HEK293 (cell line): ENCODE measurements at regions of chr1 and their contacts with region 1.

Region 1: GRCh38 chr1:240027059-240027462 is 64.6 kb upstream of the FMN2 start:
- H3K4me3 ChIP-seq: no peak overlapping the region
- H3K27ac ChIP-seq: no peak overlapping the region
- H3K4me1 ChIP-seq: no peaks in the 10 kb centered on the region
- CTCF ChIP-seq: peak; percentile 78; the same call in 1 of the 2 replicates

Region 2: DNA sequence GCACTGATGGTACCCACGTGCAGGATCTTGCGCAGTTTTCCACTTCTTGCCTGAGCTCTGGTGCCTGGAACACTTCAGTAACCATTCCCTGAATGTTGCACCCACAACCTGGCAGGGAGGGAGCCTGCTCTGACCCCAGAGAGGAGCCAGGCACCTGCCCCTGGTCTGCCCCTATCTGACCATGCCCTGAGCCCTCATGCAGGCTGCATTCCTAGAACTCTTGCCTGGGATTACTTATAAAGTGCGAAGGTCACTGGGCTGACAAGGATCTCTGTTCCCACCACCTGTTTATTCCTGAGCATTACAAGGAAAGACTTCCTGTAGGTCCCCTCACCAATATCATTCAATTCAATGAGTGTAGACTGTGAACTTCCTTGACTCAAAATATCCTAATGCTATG is 127.3 kb before region 1 on chr1:
- CTCF ChIA-PET with region 1: no interaction called
- POLR2A ChIA-PET with region 1: no interaction called
- H3K4me3 ChIP-seq: no peak overlapping the region
- H3K27ac ChIP-seq: no peak overlapping the region
- H3K4me1 ChIP-seq: peaks cover 5% of the 10 kb centered on the region; the same call in 1 of the 2 replicates
- CTCF ChIP-seq: no peak

Region 3: DNA sequence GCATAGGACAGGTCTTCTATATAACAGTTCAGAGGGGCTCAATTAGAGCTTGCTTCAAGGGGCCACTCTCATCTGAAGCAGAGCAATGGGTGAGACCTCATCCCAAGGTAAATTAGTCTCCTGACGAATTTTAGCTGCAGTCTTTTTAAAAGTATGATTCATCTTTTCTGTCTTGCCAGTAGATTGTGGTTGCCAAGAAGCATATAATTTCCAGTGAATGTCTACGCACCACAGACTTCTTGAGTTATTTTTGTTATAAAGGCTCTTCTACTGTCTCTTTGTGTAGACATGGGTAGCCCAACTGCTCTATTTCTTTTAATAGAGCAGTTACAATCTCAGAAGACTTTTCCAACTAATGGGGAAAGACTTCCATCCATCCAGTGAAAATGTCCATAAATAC is 44.3 kb before region 1 on chr1:
- CTCF ChIA-PET with region 1: no interaction called
- POLR2A ChIA-PET with region 1: no interaction called
- H3K4me3 ChIP-seq: no peak overlapping the region
- H3K27ac ChIP-seq: no peak overlapping the region
- H3K4me1 ChIP-seq: no peaks in the 10 kb centered on the region
- CTCF ChIP-seq: no peak

Region 4: DNA sequence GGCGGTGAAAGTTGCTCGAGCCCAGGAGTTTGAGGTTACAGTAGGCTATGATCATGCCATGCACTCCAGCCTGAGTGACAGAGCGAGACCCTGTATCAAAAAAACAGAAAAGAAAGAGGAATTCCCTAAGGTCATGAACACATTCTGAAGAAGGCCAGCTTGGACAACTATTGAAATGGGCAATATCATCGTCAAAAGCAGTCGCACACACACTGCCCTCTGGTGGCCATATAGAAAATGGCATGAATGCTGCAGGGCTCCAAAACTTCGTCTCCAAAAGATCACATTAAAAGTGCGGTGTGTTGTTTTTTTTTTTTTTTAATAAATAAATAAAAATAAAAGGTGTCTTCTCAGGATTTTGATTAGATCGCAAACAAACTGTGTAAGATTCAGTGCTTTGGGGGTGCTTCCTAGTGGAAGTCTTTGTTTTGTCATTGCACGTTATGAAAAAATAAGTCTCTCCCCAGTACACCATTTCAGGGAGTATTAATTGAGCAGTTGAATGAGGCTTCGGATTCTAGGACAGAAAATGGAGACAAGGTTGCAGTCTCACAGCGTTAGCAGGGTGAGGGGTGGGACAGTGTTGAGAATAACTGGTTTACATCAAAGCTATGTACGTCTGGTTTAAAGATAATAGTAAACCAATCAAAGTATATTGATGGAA is 22.8 kb before region 1 on chr1:
- CTCF ChIA-PET with region 1: interaction called, 27 read pairs
- POLR2A ChIA-PET with region 1: no interaction called
- H3K4me3 ChIP-seq: no peak overlapping the region
- H3K27ac ChIP-seq: no peak overlapping the region
- H3K4me1 ChIP-seq: peaks cover 6% of the 10 kb centered on the region
- CTCF ChIP-seq: 0 out of 2 replicates have a peak, but pooled peaks have one; percentile 60

Region 5: DNA sequence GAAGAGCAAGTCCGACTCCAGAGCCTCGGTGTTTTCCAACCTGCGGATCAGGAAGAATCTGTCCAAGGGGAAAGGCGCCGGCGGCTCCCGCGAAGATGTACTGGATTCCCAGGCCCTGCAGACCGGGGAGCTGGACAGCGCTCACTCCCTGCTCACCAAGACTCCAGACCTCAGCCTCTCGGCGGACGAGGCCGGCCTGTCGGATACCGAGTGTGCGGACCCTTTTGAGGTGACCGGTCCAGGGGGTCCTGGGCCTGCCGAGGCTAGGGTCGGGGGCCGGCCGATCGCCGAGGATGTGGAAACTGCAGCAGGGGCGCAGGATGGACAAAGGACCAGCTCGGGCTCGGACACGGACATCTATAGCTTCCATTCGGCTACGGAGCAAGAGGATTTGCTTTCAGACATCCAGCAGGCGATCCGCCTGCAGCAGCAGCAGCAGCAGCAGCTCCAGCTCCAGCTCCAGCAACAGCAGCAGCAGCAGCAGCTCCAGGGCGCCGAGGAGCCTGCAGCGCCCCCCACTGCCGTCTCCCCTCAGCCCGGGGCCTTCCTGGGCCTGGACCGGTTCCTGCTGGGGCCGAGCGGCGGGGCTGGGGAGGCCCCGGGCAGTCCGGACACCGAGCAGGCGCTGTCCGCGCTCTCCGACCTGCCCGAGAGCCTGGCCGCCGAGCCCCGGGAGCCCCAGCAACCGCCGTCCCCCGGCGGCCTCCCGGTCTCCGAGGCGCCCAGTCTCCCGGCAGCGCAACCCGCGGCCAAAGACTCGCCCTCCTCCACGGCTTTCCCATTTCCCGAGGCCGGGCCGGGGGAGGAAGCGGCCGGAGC is 65.4 kb after region 1 on chr1:
- CTCF ChIA-PET with region 1: interaction called, 10 read pairs
- POLR2A ChIA-PET with region 1: interaction called, 3 read pairs
- H3K4me3 ChIP-seq: peak overlapping the region; percentile 89
- H3K27ac ChIP-seq: peak overlapping the region; percentile 83; the same call in 1 of the 2 replicates
- H3K4me1 ChIP-seq: peaks cover 26% of the 10 kb centered on the region
- CTCF ChIP-seq: peak; percentile 77

Region 6: GRCh38 chr1:240169188-240169587 is 142.1 kb after region 1 on chr1:
- CTCF ChIA-PET with region 1: interaction called, 19 read pairs
- POLR2A ChIA-PET with region 1: no interaction called
- H3K4me3 ChIP-seq: no peak overlapping the region
- H3K27ac ChIP-seq: no peak overlapping the region
- H3K4me1 ChIP-seq: peaks cover 5% of the 10 kb centered on the region; the same call in 1 of the 2 replicates
- CTCF ChIP-seq: peak; percentile 39; the same call in 1 of the 2 replicates

Region 7: GRCh38 chr1:240515505-240515904 is 488.4 kb after region 1 on chr1:
- CTCF ChIA-PET with region 1: interaction called, 12 read pairs
- POLR2A ChIA-PET with region 1: no interaction called
- H3K4me3 ChIP-seq: no peak overlapping the region
- H3K27ac ChIP-seq: no peak overlapping the region
- H3K4me1 ChIP-seq: peaks cover 18% of the 10 kb centered on the region
- CTCF ChIP-seq: no peak